HepG2 (cell line): ENCODE measurements at regions of chr4 and their contacts with region 1.

Region 1: DNA sequence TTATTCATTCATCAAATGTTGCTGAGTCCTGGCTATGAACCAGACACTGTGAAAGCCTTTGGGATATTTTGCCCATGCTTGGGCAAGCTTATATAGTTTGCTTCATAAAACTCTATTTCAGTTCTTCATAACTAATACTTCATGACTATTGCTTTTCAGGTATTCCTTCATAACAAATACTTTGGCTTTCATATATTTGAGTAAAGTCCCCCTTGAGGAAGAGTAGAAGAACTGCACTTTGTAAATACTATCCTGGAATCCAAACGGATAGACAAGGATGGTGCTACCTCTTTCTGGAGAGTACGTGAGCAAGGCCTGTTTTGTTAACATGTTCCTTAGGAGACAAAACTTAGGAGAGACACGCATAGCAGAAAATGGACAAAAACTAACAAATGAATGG is 1.7 kb upstream of the AFP start:
- DNase-seq: peak; percentile 45
- ATAC-seq: peak; percentile 13; the same call in 2 of the 3 replicates
- H3K4me3 ChIP-seq: no peak overlapping the region; a peak in 1 of 6 replicates
- H3K27ac ChIP-seq: peak overlapping the region; percentile 98
- H3K4me1 ChIP-seq: peaks cover 80% of the 10 kb centered on the region
- H3K27me3 ChIP-seq: no peaks in the 10 kb centered on the region
- CTCF ChIP-seq: peak; percentile 69
- EP300 ChIP-seq: peak in 1 of 2 experiments; percentile 35; a peak in 1 of 4 replicates
- POLR2A ChIP-seq: no peak
- RAD21 ChIP-seq: no peak

Region 2: DNA sequence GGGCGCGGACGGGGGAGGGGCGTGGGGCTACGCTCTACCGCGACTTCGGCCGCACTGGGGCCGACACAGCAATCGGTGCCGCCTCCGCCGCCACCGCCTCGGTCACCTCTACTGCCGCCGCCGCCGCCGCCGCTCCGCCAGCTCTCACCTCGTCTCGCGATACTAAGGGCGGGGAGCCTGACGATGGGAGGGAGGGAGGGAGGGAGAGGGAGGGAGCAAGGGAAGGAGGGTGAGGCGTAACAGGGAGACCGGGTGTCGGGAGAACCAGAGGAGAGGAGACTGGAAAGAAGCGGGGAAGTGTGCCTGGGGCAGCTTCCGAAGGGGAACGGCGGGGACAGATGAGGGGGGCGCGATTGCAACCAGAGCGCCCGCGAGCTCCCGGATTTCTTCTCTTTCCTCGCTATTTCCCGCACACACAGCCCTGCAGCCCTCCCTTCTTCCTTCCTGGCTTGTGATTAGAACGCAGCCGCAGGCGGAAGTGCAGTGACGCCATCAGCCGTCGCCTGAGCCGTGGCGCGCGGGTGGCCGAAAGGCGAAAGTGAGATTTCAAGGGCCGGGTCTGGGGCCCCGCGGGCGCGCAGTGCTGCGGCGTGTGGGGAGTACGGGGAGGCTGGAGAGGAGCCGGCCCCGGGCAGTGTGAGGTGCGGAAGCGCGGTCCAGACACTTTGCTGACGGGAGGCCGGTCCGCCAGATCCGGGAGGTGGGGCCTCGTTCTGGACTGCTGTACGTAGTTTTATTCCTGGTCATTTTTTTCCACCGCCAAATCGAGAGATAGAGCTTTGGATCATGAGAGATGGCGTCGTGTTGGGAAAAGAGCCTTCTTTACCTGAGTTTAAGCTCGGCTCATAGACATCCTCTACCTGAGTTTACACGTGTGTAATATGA is 175.4 kb before region 1 on chr4 and contains the start of gene ANKRD17:
- CTCF ChIA-PET with region 1: no interaction called
- POLR2A ChIA-PET with region 1: interaction called, 3 read pairs
- in situ Hi-C with region 1: no loop called
- intact Hi-C with region 1: loop called (anchors 10 kb)
- DNase-seq: peak; percentile 89
- ATAC-seq: peak; percentile 89
- H3K4me3 ChIP-seq: peak within 1 kb of the TSS; percentile 82 to 93 (median 83)
- H3K27ac ChIP-seq: peak within 1 kb of the TSS; percentile 99
- H3K4me1 ChIP-seq: peaks cover 45% of the 10 kb centered on the region
- H3K27me3 ChIP-seq: no peaks in the 10 kb centered on the region; a peak in 1 of 5 replicates
- CTCF ChIP-seq: peak; percentile 26; the same call in 1 of the 2 replicates
- EP300 ChIP-seq: peak in 1 of 2 experiments; percentile 55; a peak in 1 of 4 replicates
- POLR2A ChIP-seq: peak; percentile 88 to 96
- RAD21 ChIP-seq: peak; percentile 50
- total RNA-seq, gene ANKRD17: 61.1 and 97.9 TPM in 2 replicates

Region 3: DNA sequence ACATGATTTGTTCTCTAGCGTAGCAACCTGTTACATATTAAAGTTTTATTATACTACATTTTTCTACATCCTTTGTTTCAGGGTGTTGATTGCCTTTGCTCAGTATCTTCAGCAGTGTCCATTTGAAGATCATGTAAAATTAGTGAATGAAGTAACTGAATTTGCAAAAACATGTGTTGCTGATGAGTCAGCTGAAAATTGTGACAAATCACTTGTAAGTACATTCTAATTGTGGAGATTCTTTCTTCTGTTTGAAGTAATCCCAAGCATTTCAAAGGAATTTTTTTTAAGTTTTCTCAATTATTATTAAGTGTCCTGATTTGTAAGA is 27.8 kb before region 1 on chr4:
- CTCF ChIA-PET with region 1: no interaction called
- POLR2A ChIA-PET with region 1: interaction called, 34 read pairs
- in situ Hi-C with region 1: no loop called
- intact Hi-C with region 1: no loop called
- DNase-seq: no peak
- ATAC-seq: no peak
- H3K4me3 ChIP-seq: peak overlapping the region; percentile 68 to 86 (median 71)
- H3K27ac ChIP-seq: peak overlapping the region; percentile 89
- H3K4me1 ChIP-seq: peaks cover 58% of the 10 kb centered on the region
- H3K27me3 ChIP-seq: no peaks in the 10 kb centered on the region
- CTCF ChIP-seq: no peak
- EP300 ChIP-seq: no peak
- POLR2A ChIP-seq: no peak; a peak in 1 of 4 replicates
- RAD21 ChIP-seq: no peak

Region 4: GRCh38 chr4:73417973-73418372 is 16.3 kb before region 1 on chr4:
- CTCF ChIA-PET with region 1: no interaction called
- POLR2A ChIA-PET with region 1: interaction called, 85 read pairs
- in situ Hi-C with region 1: no loop called
- intact Hi-C with region 1: loop called (anchors 1 kb)
- DNase-seq: no peak
- ATAC-seq: no peak
- H3K4me3 ChIP-seq: peak overlapping the region in 2 of 3 experiments; percentile 21 to 46; a peak in 4 of 6 replicates
- H3K27ac ChIP-seq: peak overlapping the region; percentile 89
- H3K4me1 ChIP-seq: peaks cover 46% of the 10 kb centered on the region
- H3K27me3 ChIP-seq: no peaks in the 10 kb centered on the region
- CTCF ChIP-seq: no peak
- EP300 ChIP-seq: no peak
- POLR2A ChIP-seq: peak in 1 of 2 experiments; percentile 74; a peak in 2 of 4 replicates
- RAD21 ChIP-seq: no peak

Region 5: DNA sequence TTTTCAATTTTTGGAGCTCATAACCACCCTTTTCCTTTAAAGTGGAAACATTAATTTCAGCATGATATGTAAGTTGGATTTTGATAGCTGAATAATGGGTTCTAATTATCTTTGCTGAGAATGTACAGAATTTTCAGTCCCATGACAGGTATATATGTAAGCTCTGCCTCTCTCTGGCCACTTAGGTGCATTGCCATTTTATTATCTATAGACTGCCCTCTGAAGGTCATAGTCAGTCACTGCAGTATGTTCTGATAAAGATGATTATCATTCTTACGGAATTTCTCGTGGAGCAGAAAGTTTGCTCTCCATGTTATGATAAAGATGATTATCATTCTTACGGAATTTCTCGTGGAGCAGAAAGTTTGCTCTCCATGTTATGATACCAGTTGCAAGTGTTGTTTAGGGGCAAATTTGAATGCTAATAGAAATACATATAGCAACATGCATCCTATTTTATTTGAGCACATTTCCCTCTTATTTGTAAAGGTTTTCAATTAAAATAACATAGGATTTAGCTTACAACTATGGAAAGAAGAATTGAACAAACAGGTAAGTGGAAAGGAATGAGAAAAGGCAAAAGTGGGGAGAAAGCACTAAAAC is 12.1 kb after region 1 on chr4:
- CTCF ChIA-PET with region 1: interaction called, 6 read pairs
- POLR2A ChIA-PET with region 1: interaction called, 13 read pairs
- in situ Hi-C with region 1: no loop called
- intact Hi-C with region 1: no loop called
- DNase-seq: peak; percentile 78
- ATAC-seq: peak; percentile 64
- H3K4me3 ChIP-seq: no peak overlapping the region; a peak in 1 of 6 replicates
- H3K27ac ChIP-seq: peak overlapping the region; percentile 38
- H3K4me1 ChIP-seq: peaks cover 82% of the 10 kb centered on the region
- H3K27me3 ChIP-seq: no peaks in the 10 kb centered on the region
- CTCF ChIP-seq: peak; percentile 75
- EP300 ChIP-seq: no peak
- POLR2A ChIP-seq: peak in 1 of 2 experiments; percentile 39; a peak in 2 of 4 replicates
- RAD21 ChIP-seq: peak; percentile 75